Left cardiac atrium (tissue), 4 donors: ENCODE measurements at regions of chr10 and their contacts with region 1.

Region 1: DNA sequence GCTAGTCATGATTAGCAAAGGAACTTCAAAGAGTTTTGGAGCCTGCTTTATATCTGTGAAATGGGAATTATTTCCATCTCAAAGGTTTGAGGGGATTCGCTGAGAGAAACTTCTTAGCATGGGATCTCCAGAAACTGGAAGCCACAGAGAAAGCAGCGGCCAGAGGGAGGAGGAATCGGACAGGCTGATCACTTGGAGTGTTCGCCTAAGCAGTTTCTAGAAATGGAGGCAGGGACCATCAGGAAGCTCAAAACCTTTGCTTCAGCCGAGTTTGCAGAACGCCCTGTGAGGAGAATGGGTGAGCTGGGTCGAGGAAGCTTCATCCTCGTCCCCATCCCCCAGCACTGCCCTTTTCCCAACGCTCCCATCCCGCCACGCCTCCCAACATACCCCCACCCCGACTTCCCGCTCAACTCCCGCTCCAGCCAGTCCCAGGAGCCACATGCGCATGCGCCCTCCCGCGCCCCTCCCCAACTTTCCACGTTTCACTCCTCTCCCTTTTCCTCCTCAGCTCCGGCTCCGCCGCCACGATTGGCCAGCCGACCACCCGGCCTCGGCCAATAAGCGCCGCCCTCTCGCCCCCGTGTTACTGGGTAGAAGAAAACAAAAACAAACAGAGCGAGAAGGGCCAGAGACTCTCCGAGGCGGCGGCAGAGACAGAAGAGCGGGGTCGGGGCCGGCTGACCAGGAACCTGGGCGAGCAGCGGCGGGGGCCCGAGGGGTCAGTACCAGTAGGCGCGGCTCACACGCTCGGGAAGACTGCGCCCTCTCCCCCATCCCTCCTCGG is at the start of gene PDCD4:
- DNase-seq: peak; percentile 100
- ATAC-seq: peak; percentile 95 to 97
- total RNA-seq, gene PDCD4: 46.7 to 71.2 TPM

Region 2: GRCh38 chr10:110758898-110759297 is 112.6 kb before region 1 on chr10:
- intact Hi-C with region 1: loop called in 1 of 2 experiments (anchors 5 kb)
- DNase-seq: no peak
- ATAC-seq: peak in 1 of 2 donors; percentile 14

Region 3: DNA sequence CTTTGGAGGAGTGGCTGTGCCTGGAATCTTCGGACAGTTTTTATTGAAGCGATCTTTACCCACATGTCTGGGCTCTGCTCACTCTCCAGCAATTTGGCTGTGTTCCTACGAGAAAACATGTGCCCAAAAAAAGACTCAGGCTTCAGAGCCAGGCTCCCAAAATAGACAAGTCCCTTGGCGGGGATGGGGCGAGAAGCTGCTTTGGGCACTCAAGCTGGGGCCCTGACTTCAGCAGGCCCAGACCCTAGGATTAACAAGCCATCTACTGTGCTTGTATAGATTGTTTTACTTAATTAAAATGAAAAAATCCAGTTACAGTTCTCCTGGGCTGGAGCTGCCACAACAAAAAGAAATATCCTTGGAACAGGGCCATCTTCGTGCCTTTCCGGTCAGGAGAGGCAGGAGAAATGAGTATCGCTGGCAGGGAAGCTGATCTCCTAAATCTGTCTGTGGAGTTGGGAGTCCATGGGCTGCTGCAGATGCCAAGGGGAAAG is 51.1 kb before region 1 on chr10:
- intact Hi-C with region 1: loop called (anchors 5 to 10 kb)
- DNase-seq: peak; percentile 59
- ATAC-seq: peak; percentile 70 to 82

Region 4: DNA sequence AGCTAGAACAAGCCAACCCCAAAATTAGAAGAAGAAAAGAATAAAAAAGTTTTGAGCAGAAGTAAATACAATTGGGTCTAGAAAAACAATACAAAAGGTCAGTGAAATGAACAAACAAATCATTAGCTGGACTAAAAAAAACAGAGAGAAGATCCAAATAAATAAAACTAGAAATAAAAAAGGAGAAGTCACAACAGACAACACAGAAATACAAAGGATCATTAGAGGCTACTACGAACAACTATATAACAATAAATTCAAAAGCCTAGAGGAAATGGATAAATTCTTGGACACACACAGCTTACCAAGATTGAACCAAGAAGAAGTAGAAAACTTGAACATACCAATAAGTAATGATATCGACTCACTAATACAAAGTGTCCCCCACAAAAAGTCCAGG is 192.0 kb after region 1 on chr10:
- intact Hi-C with region 1: no loop called
- DNase-seq: no peak
- ATAC-seq: no peak